Activated CD4-positive, alpha-beta memory T cell treated with anti-CD3 and anti-CD28 coated beads for 36 hours (primary cell): ENCODE measurements at regions of chr15 and their contacts with region 1.

Region 1: DNA sequence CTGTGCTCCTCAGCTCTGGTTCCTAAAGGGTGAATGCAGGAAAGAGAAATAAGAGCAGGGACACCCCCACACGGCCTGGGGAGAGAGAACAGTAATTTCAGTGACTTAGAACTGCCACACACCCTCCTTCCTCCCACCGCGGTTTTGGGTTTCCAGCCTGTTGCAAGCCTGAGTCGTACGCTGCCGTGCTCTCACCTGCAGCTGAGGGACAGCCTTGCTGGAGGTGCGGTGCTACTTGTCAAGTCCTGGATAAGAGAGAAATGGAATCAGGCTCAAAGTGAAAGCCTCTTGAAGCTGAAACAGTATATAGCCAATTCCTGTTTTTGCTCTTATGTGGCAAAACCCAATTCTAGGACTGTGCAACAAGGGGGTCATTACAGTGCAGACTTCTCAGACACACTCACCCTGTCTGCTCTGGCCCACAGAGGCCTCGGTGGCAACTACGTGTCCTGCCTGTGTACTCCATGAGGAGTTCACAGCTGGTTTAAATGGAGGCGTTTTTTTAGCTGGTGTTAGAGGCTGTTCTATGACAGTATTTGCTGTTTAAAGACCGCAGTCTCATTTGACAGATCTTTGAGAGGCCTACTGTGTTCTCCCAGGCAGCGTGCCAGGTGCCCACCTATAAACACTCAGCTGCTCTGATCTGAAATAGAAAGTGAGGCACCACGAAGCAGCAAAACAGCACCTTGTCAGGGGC is 42.9 kb downstream of the TBC1D2B start:
- DNase-seq: peak; percentile 94
- H3K4me3 Mint-ChIP-seq: peak overlapping the region; percentile 43
- H3K27ac Mint-ChIP-seq: peak overlapping the region; percentile 73
- H3K4me1 Mint-ChIP-seq: peaks cover 85% of the 10 kb centered on the region
- H3K27me3 Mint-ChIP-seq: no peaks in the 10 kb centered on the region

Region 2: DNA sequence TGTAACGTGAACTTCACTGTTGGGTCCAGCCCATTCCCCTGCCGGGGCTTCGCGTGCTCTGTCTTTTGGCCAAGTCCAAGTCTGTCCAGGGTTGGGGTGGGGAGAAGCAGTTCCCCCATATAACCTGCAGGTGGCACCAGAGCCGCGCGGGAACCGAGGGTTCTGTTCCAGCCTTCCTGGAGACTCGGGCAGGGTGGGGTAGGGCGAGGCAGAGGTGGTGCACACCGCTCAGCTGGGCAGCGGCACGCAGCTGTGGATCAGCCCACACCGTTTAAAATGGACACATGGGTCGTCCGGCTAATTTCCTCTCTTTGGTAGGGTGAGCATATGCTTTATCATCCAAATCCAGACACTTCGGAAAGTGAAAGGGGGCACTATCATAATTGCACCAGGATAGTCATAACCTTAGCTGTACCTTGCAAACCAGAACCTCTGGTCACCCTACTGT is 75.2 kb before region 1 on chr15:
- CTCF ChIA-PET with region 1: interaction called, 8 read pairs
- POLR2A ChIA-PET with region 1: no interaction called
- intact Hi-C with region 1: loop called (anchors 10 kb)
- DNase-seq: peak; percentile 87
- H3K4me3 Mint-ChIP-seq: peak overlapping the region; percentile 30
- H3K27ac Mint-ChIP-seq: no peak overlapping the region
- H3K4me1 Mint-ChIP-seq: peaks cover 7% of the 10 kb centered on the region
- H3K27me3 Mint-ChIP-seq: peaks cover 8% of the 10 kb centered on the region

Region 3: GRCh38 chr15:78049691-78050440 is 15.2 kb after region 1 on chr15:
- CTCF ChIA-PET with region 1: interaction called, 38 read pairs
- POLR2A ChIA-PET with region 1: interaction called, 49 read pairs
- intact Hi-C with region 1: loop called (anchors 1 kb)
- DNase-seq: peak; percentile 83
- H3K4me3 Mint-ChIP-seq: peak overlapping the region; percentile 30
- H3K27ac Mint-ChIP-seq: peak overlapping the region; percentile 92
- H3K4me1 Mint-ChIP-seq: peaks cover 99% of the 10 kb centered on the region
- H3K27me3 Mint-ChIP-seq: no peaks in the 10 kb centered on the region

Region 4: DNA sequence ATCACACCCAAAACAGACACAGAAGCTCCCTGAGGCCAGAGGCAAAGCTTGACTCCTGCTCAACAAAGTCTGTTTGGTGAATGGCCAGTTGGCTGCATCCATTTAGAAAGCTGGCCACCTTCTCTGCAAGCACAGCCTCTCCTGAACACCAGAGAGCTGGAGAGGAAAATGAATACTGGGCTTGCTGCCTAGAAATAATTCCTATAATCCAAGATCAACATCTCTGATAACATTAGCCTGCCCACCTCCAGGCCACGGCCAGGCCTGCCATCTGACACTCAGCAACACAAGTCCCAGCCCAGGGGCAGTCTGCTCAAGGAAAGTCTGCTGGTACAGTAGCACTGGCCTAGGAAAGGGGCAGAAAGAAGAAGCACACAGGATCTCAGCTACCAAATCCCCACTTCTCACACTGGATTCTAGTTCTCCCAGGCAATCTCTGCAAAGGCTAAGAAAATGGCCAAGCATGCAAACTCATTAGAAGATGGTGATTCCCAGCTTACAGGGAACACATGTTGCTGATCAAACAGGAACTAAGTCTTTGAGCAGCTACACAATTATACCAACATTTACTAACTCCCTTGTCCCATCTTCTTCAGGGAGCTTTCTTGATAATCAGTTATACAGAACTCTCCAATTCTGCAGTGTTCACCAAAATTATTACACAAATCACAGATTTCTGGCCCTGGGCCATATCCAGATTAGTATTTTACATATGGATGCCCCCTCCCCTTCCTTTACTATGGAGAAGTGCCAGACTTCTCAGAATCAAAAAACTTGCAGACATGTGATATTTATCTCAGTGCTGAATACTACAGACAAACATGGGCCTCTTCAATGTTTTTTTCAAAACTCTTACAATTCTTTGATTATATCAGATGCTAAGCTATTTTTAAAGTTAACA is 32.9 kb after region 1 on chr15:
- CTCF ChIA-PET with region 1: interaction called, 26 read pairs
- POLR2A ChIA-PET with region 1: interaction called, 39 read pairs
- intact Hi-C with region 1: loop called (anchors 1 kb)
- DNase-seq: no peak
- H3K4me3 Mint-ChIP-seq: no peak overlapping the region
- H3K27ac Mint-ChIP-seq: no peak overlapping the region
- H3K4me1 Mint-ChIP-seq: peaks cover 16% of the 10 kb centered on the region
- H3K27me3 Mint-ChIP-seq: no peaks in the 10 kb centered on the region

Region 5: GRCh38 chr15:78167227-78167888 is 132.7 kb after region 1 on chr15:
- CTCF ChIA-PET with region 1: no interaction called
- POLR2A ChIA-PET with region 1: no interaction called
- intact Hi-C with region 1: loop called (anchors 1 kb)
- DNase-seq: peak; percentile 66
- H3K4me3 Mint-ChIP-seq: no peak overlapping the region
- H3K27ac Mint-ChIP-seq: peak overlapping the region; percentile 49
- H3K4me1 Mint-ChIP-seq: peaks cover 20% of the 10 kb centered on the region
- H3K27me3 Mint-ChIP-seq: no peaks in the 10 kb centered on the region